ENCODE measurements at regions of chr5 and their contacts with region 1.

Region 1: DNA sequence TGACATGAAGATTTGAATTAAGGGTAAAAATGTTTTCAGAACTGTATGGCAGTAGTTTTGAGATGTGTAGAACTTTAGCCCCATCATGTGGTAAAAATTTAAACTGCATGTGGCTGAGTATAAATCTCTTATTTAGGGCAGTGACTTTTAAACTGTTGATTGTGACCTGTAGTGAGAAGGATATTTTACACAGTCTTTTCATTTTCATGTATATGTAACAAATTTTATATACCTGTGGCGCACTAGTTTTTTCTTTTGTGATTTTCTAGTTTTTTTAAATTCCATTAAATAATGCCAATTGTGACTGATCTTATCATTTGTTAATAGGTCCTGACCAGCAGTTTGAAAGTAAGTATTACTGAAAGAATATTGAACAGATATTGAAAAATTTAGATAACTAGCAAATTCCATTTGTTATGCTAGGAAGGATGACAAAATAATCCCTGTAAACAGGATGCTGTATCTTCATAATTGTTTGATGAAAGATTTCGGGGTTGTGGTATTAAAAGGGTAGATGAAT is 47.2 kb downstream of the GPBP1 start:
- DNase-seq: no peak
- H3K4me3 ChIP-seq: no peak overlapping the region
- H3K27ac ChIP-seq: no peak overlapping the region
- H3K4me1 ChIP-seq: peaks cover 5 to 6% of the 10 kb centered on the region in 2 donors
- H3K27me3 ChIP-seq: no peaks in the 10 kb centered on the region
- CTCF ChIP-seq: peak; percentile 80 to 90 (median 89)

Region 2: GRCh38 chr5:56900858-56901578 is 320.1 kb before region 1 on chr5:
- intact Hi-C with region 1: loop called (anchors 1 kb)
- DNase-seq: no peak
- H3K4me3 ChIP-seq: no peak overlapping the region
- H3K27ac ChIP-seq: no peak overlapping the region
- H3K4me1 ChIP-seq: no peaks in the 10 kb centered on the region
- H3K27me3 ChIP-seq: no peaks in the 10 kb centered on the region
- CTCF ChIP-seq: peak; percentile 50 to 80 (median 59)

Region 3: GRCh38 chr5:56951946-56952691 is 269.0 kb before region 1 on chr5 and contains the start of gene MIER3:
- intact Hi-C with region 1: loop called (anchors 2 kb)
- DNase-seq: peak; percentile 12 to 87
- H3K4me3 ChIP-seq: peak within 1 kb of the TSS; percentile 82 to 98
- H3K27ac ChIP-seq: peak within 1 kb of the TSS; percentile 87 to 92
- H3K4me1 ChIP-seq: peaks cover 0 to 2% of the 10 kb centered on the region in 2 donors
- H3K27me3 ChIP-seq: no peaks in the 10 kb centered on the region
- CTCF ChIP-seq: no peak
- total RNA-seq, gene MIER3: 5.5 TPM